ENCODE measurements at regions of chr22 and their contacts with region 1.

Region 1: GRCh38 chr22:28051787-28052356 is 132.8 kb upstream of the PITPNB start:
- DNase-seq: peak in 1 of 2 donors; percentile 37
- H3K4me3 ChIP-seq: no peak overlapping the region
- H3K27ac ChIP-seq: no peak overlapping the region
- H3K4me1 ChIP-seq: no peaks in the 10 kb centered on the region
- H3K27me3 ChIP-seq: no peaks in the 10 kb centered on the region
- CTCF ChIP-seq: peak; percentile 31 to 79 (median 73)
- POLR2A ChIP-seq: no peak

Region 2: GRCh38 chr22:28105413-28105812 is 53.5 kb after region 1 on chr22:
- intact Hi-C with region 1: no loop called
- DNase-seq: no peak
- H3K4me3 ChIP-seq: no peak overlapping the region
- H3K27ac ChIP-seq: no peak overlapping the region
- H3K4me1 ChIP-seq: no peaks in the 10 kb centered on the region
- H3K27me3 ChIP-seq: no peaks in the 10 kb centered on the region
- CTCF ChIP-seq: no peak
- POLR2A ChIP-seq: no peak

Region 3: DNA sequence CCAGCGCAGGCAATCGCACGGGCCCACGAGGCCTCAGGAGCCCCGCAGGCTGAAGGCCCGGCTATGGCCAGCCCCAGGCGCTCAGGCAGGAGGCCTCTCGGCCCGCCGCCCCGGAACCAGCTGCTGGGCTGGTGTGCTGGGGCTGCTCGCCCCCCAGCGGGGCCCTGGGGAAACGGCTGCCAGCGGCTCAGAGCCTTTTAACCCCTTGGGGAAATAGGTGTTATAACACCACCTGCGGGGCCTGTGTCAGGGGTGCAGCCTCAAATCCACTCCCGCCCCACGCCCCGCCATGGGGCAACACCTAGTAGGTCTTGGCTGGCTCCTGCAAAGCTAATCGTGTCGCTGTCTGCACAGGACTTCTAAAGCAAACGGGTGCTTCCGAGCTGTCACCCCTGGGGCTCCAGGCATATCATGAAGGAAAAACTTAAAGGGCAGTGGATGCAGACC is 390.4 kb after region 1 on chr22:
- intact Hi-C with region 1: loop called (anchors 10 kb)
- DNase-seq: peak; percentile 38 to 59
- H3K4me3 ChIP-seq: peak overlapping the region; percentile 47 to 80 (median 64)
- H3K27ac ChIP-seq: peak overlapping the region; percentile 78 to 88
- H3K4me1 ChIP-seq: peaks cover 0 to 11% of the 10 kb centered on the region in 2 donors
- H3K27me3 ChIP-seq: no peaks in the 10 kb centered on the region
- CTCF ChIP-seq: peak in 1 of 3 donors; percentile 48
- POLR2A ChIP-seq: no peak